Heart right ventricle (tissue), 16 donors: ENCODE measurements at regions of chr17 and their contacts with region 1.

Region 1: GRCh38 chr17:1122533-1123392 is 57.0 kb downstream of the ABR start:
- DNase-seq: peak; percentile 90
- ATAC-seq: peak; percentile 78 to 91 (median 85)
- H3K4me3 ChIP-seq: no peak overlapping the region
- H3K27ac ChIP-seq: peak overlapping the region in 9 of 10 donors; percentile 34 to 75 (median 59)
- H3K4me1 ChIP-seq: peaks cover 7 to 49% (median 36%) of the 10 kb centered on the region in 9 donors
- H3K27me3 ChIP-seq: no peaks in the 10 kb centered on the region
- CTCF ChIP-seq: peak; percentile 92 to 98 (median 94)

Region 2: DNA sequence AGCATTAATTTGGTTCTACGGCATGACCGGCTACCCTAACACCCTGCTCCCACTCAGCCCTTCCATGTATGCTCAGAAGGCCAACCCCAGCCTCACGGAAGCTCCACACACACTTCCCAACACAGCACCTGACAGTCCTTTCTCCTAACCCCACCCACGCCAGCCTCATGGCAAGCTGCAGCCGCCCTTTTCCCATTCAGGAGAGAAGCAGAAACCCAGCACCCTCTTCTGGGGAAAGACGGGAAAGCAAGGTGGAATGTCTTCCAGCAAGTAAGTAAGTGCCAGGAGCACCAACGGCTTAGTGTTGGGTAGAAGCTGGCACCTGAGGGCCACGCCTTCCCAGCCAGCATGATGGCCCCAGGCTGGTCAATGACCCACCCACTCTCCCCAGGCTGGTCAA is 24.9 kb after region 1 on chr17:
- intact Hi-C with region 1: loop called in 1 of 10 experiments (anchors 2 kb)
- DNase-seq: peak in 1 of 2 donors; percentile 65
- ATAC-seq: peak in 7 of 8 donors; percentile 6 to 47 (median 32)
- H3K4me3 ChIP-seq: no peak overlapping the region
- H3K27ac ChIP-seq: no peak overlapping the region
- H3K4me1 ChIP-seq: peaks cover 0 to 44% (median 20%) of the 10 kb centered on the region in 9 donors
- H3K27me3 ChIP-seq: no peaks in the 10 kb centered on the region
- CTCF ChIP-seq: peak in 8 of 9 donors; percentile 5 to 63 (median 48)

Region 3: DNA sequence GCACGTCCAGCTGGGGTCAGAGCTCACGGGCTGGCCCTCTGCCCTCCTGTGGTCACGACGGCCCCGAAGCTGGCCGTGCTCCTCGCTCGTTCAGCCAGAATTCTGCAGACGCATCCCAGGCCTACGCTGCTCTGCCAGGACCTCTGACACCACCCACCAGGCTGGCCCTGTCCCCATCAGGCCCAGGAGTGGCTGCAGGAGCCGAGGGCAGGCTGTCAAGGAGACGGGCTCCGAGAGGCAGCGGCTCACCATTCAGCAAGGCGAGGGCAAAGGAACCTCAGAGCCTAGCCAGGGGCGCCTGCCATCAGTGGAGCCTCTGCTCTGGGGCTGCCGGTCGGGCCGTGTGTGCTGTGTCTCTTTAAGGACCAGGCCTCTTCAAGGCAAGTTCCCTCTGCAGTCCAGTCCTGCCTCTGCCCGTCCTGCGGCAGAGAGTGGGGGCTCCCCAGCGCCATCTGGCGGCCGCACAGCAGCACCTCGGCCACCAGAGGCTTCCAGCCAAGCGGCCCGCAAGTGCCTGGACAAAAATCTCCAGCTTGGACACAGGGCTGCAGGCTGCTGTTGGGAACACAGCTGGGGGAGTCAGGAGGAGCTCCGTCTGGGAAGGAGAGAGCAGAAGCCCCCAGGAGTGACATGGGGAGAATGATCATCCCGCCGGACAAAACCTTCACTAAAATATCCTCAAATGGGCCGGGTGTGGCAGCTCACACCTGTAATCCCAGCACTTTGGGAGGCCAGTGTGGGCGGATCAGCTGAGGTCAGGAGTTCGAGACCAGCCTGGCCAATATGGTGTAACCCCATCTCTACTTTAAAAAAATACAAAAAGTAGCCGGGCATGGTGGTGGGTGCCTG is 64.4 kb after region 1 on chr17:
- intact Hi-C with region 1: loop called (anchors 1 to 5 kb)
- DNase-seq: peak; percentile 86 to 90
- ATAC-seq: peak; percentile 88 to 95 (median 92)
- H3K4me3 ChIP-seq: peak overlapping the region; percentile 2 to 54 (median 46)
- H3K27ac ChIP-seq: peak overlapping the region; percentile 57 to 93 (median 85)
- H3K4me1 ChIP-seq: peaks cover 25 to 74% (median 58%) of the 10 kb centered on the region in 9 donors
- H3K27me3 ChIP-seq: no peaks in the 10 kb centered on the region
- CTCF ChIP-seq: peak; percentile 97 to 99 (median 99)